CD8-positive, alpha-beta T cell (primary cell): ENCODE measurements at regions of chr6 and their contacts with region 1.

Region 1: GRCh38 chr6:83859410-83860358 is at the start of gene CYB5R4:
- DNase-seq: peak; percentile 87 to 97 (median 93)
- ATAC-seq: peak; percentile 96
- H3K4me3 ChIP-seq: peak within 1 kb of the TSS; percentile 69 to 78
- H3K4me3 Mint-ChIP-seq: peak within 1 kb of the TSS; percentile 95
- H3K27ac ChIP-seq: peak within 1 kb of the TSS; percentile 83 to 86
- H3K27ac Mint-ChIP-seq: peak within 1 kb of the TSS; percentile 91
- H3K4me1 ChIP-seq: peaks cover 18% of the 10 kb centered on the region
- H3K4me1 Mint-ChIP-seq: peaks cover 41% of the 10 kb centered on the region
- H3K27me3 ChIP-seq: no peaks in the 10 kb centered on the region
- H3K27me3 Mint-ChIP-seq: peaks cover 12% of the 10 kb centered on the region
- CTCF ChIP-seq: peak; percentile 52
- total RNA-seq, gene CYB5R4: 15.9 to 17.7 TPM

Region 2: GRCh38 chr6:82980086-82980485 is 879.6 kb before region 1 on chr6:
- CTCF ChIA-PET with region 1: no interaction called
- POLR2A ChIA-PET with region 1: no interaction called
- intact Hi-C with region 1: no loop called
- DNase-seq: no peak
- ATAC-seq: no peak
- H3K4me3 ChIP-seq: no peak overlapping the region
- H3K4me3 Mint-ChIP-seq: no peak overlapping the region
- H3K27ac ChIP-seq: no peak overlapping the region
- H3K27ac Mint-ChIP-seq: no peak overlapping the region
- H3K4me1 ChIP-seq: no peaks in the 10 kb centered on the region
- H3K4me1 Mint-ChIP-seq: no peaks in the 10 kb centered on the region
- H3K27me3 ChIP-seq: no peaks in the 10 kb centered on the region
- H3K27me3 Mint-ChIP-seq: no peaks in the 10 kb centered on the region
- CTCF ChIP-seq: no peak

Region 3: DNA sequence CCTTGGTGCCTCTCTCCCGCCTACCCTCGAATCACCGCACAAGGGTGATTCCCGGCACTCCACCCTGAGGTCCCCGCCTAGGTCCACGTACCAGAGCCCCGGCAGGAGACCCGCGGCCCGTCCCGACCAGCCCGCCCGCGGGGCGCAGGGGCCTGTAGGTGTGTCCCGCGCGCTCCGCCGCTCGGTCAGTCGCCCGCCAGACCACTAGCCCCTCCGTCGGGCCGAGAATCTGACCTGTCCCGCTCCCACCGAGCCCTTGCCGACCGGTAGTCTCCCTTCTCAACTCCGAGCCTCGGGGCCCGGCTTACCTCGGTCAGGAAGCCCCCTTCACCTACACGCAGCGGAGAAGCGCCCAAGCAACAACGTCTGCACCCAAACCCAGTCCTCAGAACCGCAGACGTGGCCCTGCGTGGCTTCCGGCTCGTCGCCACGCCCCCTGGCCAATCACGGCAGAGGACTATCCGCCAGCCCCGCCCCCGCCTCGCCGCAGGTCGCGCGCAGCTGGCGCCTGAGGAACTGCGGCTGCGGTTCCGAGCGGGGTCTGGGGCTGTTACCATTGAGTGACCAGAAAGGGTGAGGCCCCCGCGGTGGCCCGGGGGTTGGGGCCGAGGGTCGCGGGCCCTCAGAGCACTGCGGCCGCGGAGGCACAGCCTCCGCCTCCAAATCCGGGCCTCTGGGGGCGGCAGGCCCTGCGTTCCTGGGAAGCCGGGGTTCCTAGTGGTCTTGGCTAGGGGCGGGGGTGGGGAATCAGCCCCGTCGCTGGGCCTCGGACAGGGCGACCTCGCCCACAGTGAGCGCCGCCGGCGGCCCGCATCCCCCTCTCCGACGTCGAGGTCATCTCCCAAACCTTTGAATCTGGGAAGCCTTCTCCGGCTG is 666.6 kb before region 1 on chr6 and contains the starts of genes PGM3 and RWDD2A:
- CTCF ChIA-PET with region 1: no interaction called
- POLR2A ChIA-PET with region 1: no interaction called
- intact Hi-C with region 1: loop called (anchors 1 to 2 kb)
- DNase-seq: peak; percentile 74 to 95 (median 90)
- ATAC-seq: peak; percentile 97
- H3K4me3 ChIP-seq: peak within 1 kb of the TSS; percentile 82 to 84
- H3K4me3 Mint-ChIP-seq: peak within 1 kb of the TSS; percentile 99
- H3K27ac ChIP-seq: peak within 1 kb of the TSS; percentile 51 to 82
- H3K27ac Mint-ChIP-seq: peak within 1 kb of the TSS; percentile 98
- H3K4me1 ChIP-seq: peaks cover 14% of the 10 kb centered on the region
- H3K4me1 Mint-ChIP-seq: peaks cover 53% of the 10 kb centered on the region
- H3K27me3 ChIP-seq: no peaks in the 10 kb centered on the region
- H3K27me3 Mint-ChIP-seq: no peaks in the 10 kb centered on the region
- CTCF ChIP-seq: no peak
- total RNA-seq, gene PGM3: 25.8 to 26.4 TPM
- total RNA-seq, gene RWDD2A: 2.1 to 2.2 TPM

Region 4: DNA sequence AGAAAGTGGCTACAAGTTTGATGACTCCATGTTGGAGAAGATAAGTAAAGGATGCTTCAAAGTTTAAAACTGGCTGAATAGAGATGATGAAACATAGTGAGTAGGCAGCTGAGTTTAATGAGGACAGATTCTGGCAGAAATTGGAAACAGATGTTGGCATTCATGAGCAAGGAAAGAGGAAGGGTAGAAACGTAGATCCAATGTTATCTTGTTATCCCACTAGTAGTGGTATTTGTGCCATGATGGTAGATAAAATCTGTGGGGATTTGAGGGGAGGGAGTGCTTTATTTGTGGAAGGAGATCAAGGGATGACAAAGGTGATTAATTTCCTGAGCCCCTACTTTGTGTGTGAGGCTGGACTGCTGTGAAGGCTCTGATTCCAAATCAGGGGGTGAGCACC is 243.3 kb after region 1 on chr6:
- CTCF ChIA-PET with region 1: no interaction called
- POLR2A ChIA-PET with region 1: no interaction called
- intact Hi-C with region 1: no loop called
- DNase-seq: no peak
- ATAC-seq: no peak
- H3K4me3 ChIP-seq: no peak overlapping the region
- H3K4me3 Mint-ChIP-seq: no peak overlapping the region
- H3K27ac ChIP-seq: no peak overlapping the region
- H3K27ac Mint-ChIP-seq: no peak overlapping the region
- H3K4me1 ChIP-seq: no peaks in the 10 kb centered on the region
- H3K4me1 Mint-ChIP-seq: no peaks in the 10 kb centered on the region
- H3K27me3 ChIP-seq: no peaks in the 10 kb centered on the region
- H3K27me3 Mint-ChIP-seq: peaks cover 10% of the 10 kb centered on the region
- CTCF ChIP-seq: no peak